Posterior vena cava (tissue), 2 donors: ENCODE measurements at regions of chr2 and their contacts with region 1.

Region 1: GRCh38 chr2:231925303-231926179 is 655 bp downstream of the NPPC start:
- DNase-seq: peak; percentile 96

Region 2: GRCh38 chr2:232133078-232133477 is 207.5 kb after region 1 on chr2:
- intact Hi-C with region 1: loop called in 1 of 2 experiments (anchors 10 kb)
- DNase-seq: no peak

Region 3: GRCh38 chr2:232142049-232142448 is 216.5 kb after region 1 on chr2:
- intact Hi-C with region 1: loop called (anchors 5 to 10 kb)
- DNase-seq: no peak

Region 4: DNA sequence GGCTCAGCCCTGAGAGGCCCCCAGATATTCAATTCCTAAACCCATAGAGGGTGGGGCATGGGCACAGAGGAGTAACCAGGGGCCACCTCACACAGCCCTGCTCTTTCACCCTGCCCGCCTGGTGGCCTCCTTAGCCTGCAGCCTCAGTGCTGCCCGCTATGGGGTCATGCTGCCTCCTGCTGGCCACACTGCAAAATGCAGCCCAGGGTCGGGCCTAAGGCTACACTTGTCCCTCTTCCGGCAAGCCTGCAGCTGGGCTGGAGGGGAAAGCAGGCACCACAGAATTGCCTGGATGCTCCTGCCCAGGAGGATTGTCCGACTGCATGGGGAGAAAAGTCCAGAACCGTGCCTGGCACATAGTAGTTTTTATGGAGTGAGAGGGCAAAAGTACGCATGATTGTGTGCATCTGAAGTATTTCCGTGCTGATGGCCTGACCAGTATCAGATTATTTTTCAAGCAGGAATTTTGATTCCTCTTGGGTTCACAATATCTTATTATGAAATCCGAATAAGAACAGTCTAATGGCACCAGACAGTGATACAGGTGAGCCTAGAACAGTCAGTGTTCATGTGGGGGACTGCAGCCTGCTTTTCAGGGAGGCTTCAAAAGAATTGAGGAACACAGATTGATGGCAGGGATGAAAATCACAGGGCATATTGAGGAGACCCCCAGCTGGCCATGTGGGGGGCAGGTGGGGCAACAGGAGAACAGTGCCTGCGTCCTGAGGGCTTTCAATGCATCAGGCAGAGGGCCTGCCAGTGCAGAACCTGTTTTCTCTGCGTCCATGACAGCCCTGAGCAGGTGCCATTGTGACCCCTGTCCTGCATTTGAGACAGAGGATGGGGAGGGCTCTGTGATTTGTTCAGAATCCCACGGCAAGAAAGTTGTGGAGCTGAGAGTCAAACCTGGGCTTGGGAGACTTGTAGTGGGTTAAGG is 401.8 kb after region 1 on chr2:
- intact Hi-C with region 1: loop called in 1 of 2 experiments (anchors 5 kb)
- DNase-seq: peak; percentile 93